Dorsolateral prefrontal cortex (tissue), 120 donors: ENCODE measurements at regions of chr4 and their contacts with region 1.

Region 1: GRCh38 chr4:102868781-102869568 is at the start of gene CISD2:
- DNase-seq: peak; percentile 84 to 98 (median 92)
- H3K4me3 ChIP-seq: peak within 1 kb of the TSS; percentile 60 to 97 (median 82)
- H3K27ac ChIP-seq: peak within 1 kb of the TSS; percentile 63 to 99 (median 96)
- H3K27me3 ChIP-seq: no peaks in the 10 kb centered on the region
- CTCF ChIP-seq: peak in 13 of 56 donors; percentile 0 to 51 (median 22)
- total RNA-seq, gene CISD2: 18.8 to 47.4 (median 33.4) TPM

Region 2: DNA sequence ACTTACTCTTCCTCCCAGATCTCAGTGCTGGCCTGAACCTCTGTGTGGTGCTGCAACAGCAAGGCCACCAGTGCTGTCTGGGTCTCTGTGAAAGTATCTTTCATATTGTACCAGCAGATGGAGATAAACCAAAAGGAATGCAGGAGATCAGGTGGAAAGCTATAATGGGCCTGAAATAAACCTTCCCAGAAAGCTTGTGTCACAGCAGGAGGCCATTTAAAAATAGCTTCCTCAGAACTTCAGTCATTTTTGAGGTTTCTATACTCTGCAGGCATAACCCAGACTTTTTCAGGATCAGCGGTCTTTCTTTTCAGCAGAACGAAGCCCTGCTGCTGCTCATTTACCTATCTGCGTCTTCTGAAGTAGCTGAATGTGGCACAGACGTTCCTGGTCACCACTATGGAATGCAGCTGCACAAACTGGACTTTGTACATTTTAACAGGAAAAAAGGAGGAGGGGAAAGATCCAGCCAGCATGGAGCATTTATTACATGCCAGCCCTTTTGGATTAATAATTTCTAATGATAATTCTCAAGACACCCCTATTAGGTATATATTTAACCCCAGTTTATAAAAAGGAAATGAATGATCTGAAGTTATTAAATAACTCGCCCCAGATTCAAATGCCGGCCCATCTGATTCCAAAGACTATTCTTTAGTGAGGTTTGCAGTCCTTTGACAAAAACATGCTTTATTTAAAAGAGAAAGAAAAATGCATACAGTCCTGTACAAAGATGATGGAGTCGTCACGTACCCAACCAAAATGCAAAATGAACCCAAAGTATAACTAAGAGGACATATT is 248.1 kb before region 1 on chr4:
- intact Hi-C with region 1: loop called in 1 of 2 experiments (anchors 10 kb)
- DNase-seq: peak in 3 of 10 donors; percentile 34 to 60 (median 50)
- H3K4me3 ChIP-seq: peak overlapping the region in 30 of 59 donors; percentile 1 to 48 (median 22)
- H3K27ac ChIP-seq: peak overlapping the region in 52 of 59 donors; percentile 3 to 85 (median 66)
- H3K27me3 ChIP-seq: no peaks in the 10 kb centered on the region
- CTCF ChIP-seq: peak in 55 of 56 donors; percentile 52 to 86 (median 74)

Region 3: DNA sequence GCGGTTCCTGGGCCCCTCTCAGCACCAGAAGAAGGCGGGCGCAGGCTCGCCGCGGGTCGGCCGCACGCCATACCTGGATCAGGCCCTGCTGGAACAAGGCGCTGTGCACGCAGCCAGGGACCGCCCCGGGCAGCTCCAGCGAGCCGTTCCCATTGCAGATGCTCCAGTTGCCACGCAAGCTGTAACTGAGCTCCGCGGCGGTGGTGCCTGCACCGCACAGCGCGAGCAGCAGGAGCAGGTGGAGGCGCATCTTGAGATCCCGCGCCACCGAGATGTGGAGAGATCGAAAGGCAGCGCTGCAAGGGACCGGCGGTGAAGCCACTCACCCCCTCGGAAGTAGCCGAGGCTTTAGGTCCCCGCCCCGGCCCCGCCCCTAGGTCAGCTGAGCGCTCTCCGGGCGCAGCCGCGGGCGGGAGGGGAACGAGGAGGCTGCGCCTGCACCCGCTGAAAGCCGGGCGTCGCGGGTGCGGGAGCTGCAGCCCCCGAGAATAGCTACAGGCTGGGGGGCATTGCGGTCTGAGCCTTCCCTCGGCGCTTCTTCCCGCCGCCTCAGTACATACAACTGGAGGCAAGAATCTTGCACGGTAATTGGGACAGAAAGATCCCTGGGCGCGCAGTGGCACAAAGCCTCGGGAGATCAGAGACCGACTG is 108.2 kb before region 1 on chr4 and contains the start of gene MANBA:
- intact Hi-C with region 1: loop called (anchors 2 kb)
- DNase-seq: peak; percentile 65 to 89 (median 82)
- H3K4me3 ChIP-seq: peak within 1 kb of the TSS; percentile 63 to 100 (median 95)
- H3K27ac ChIP-seq: peak within 1 kb of the TSS in 58 of 59 donors; percentile 52 to 93 (median 82)
- H3K27me3 ChIP-seq: no peaks in the 10 kb centered on the region
- CTCF ChIP-seq: peak in 27 of 56 donors; percentile 4 to 48 (median 19)
- total RNA-seq, gene MANBA: 18.6 to 39.4 (median 27.7) TPM

Region 4: GRCh38 chr4:102789317-102789717 is 79.7 kb before region 1 on chr4:
- intact Hi-C with region 1: no loop called
- DNase-seq: no peak
- H3K4me3 ChIP-seq: no peak overlapping the region
- H3K27ac ChIP-seq: peak overlapping the region in 1 of 59 donors; percentile 1
- H3K27me3 ChIP-seq: no peaks in the 10 kb centered on the region
- CTCF ChIP-seq: no peak

Region 5: DNA sequence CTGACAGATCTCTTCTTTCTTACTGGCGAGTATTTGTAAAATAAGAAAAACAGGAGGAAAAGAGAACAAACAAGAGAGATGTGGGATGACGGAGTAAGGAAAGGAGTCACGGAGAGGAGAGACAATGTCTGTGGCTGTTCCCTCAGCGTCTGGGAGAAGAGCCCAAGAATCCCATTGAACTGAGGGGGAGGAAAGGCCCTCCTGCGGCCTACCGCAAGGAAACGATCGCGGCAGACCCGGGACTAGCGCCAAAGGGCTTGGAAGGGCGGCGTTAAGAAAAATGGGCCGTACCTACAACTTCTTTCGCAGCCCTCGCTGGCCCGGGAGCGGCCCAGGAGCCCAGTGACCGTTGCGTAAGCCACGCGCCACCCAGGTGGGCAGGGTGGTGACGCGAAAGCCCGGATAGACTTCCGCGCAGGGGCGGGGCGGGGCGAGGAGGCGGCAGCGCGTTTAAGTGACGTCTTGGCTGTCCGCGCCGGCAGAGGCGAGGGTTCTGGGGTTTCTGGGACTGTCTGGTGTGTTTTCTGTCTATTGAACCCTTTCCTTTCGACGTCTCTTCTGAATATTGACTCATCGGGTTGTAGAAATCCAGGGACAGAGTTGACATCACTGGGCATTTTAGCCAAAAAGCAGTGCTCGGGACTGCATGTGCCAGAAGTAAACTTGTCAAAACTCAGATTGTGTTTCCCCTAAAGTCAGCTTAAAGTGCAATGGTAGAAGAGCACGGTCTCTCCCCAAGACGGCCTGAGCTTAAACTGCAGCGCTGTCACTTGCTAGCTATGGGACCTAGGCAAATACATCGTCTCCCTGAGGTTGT is 150.5 kb after region 1 on chr4 and contains the start of gene SLC9B1:
- intact Hi-C with region 1: loop called in 1 of 2 experiments (anchors 10 kb)
- DNase-seq: peak; percentile 77 to 93 (median 90)
- H3K4me3 ChIP-seq: peak within 1 kb of the TSS; percentile 28 to 94 (median 70)
- H3K27ac ChIP-seq: peak within 1 kb of the TSS; percentile 35 to 97 (median 89)
- H3K27me3 ChIP-seq: no peaks in the 10 kb centered on the region
- CTCF ChIP-seq: peak in 17 of 56 donors; percentile 2 to 42 (median 20)
- total RNA-seq, gene SLC9B1: 1.4 to 10.5 (median 4.5) TPM

Region 6: GRCh38 chr4:103089481-103089880 is 220.5 kb after region 1 on chr4:
- intact Hi-C with region 1: loop called (anchors 5 to 10 kb)
- DNase-seq: no peak
- H3K4me3 ChIP-seq: no peak overlapping the region
- H3K27ac ChIP-seq: no peak overlapping the region
- H3K27me3 ChIP-seq: no peaks in the 10 kb centered on the region
- CTCF ChIP-seq: no peak

Region 7: GRCh38 chr4:103099691-103100392 is 230.9 kb after region 1 on chr4 and contains the start of gene BDH2:
- intact Hi-C with region 1: loop called in 1 of 2 experiments (anchors 10 kb)
- DNase-seq: peak in 3 of 10 donors; percentile 28 to 46 (median 30)
- H3K4me3 ChIP-seq: peak within 1 kb of the TSS; percentile 31 to 77 (median 58)
- H3K27ac ChIP-seq: peak within 1 kb of the TSS in 58 of 59 donors; percentile 13 to 89 (median 75)
- H3K27me3 ChIP-seq: no peaks in the 10 kb centered on the region
- CTCF ChIP-seq: peak; percentile 79 to 99 (median 92)
- total RNA-seq, gene BDH2: 22.2 to 79.3 (median 39.1) TPM